Activated B cell treated with CpG ODN at 0.5 μM for 24 hours (primary cell): ENCODE measurements at regions of chr6 and their contacts with region 1.

Region 1: DNA sequence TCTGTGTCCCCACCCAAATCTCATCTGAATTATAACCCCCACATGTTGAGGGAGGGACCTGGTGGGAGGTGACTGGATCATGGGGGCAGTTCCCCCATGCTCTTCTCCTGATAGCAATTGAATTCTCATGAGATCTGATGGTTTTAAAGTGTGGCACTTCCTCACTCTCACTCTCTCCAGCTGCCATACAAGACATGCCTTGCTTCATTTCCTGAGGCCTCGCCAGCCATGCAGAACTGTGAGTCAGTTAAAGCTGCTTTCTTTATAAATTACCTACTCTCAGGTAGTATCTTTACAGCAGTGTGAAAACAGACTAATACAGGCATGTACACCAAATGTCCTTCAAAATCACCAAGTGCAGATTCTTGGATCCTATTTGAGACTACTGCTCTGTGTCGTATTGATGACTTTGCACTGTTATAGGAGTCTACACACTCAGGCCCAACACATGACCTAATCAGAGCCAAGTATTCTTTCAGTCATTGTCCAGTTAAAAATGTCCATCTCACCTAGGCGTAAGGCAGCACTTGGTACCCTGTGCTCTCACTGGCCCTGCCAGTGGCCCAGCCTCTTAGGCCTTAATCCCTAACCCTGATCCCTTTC is 52.8 kb upstream of the UST start:
- DNase-seq: peak; percentile 33
- ATAC-seq: peak; percentile 98
- H3K4me3 Mint-ChIP-seq: peak overlapping the region; percentile 62
- H3K27ac Mint-ChIP-seq: peak overlapping the region; percentile 90
- H3K4me1 Mint-ChIP-seq: peaks cover 27% of the 10 kb centered on the region
- H3K27me3 Mint-ChIP-seq: no peaks in the 10 kb centered on the region
- CTCF ChIP-seq: no peak

Region 2: GRCh38 chr6:148451690-148452089 is 242.3 kb before region 1 on chr6:
- CTCF ChIA-PET with region 1: no interaction called
- POLR2A ChIA-PET with region 1: no interaction called
- intact Hi-C with region 1: no loop called
- DNase-seq: no peak
- ATAC-seq: peak; percentile 45
- H3K4me3 Mint-ChIP-seq: no peak overlapping the region
- H3K27ac Mint-ChIP-seq: no peak overlapping the region
- H3K4me1 Mint-ChIP-seq: peaks cover 4% of the 10 kb centered on the region
- H3K27me3 Mint-ChIP-seq: peaks cover 36% of the 10 kb centered on the region
- CTCF ChIP-seq: no peak

Region 3: GRCh38 chr6:148657048-148657447 is 36.9 kb before region 1 on chr6:
- CTCF ChIA-PET with region 1: no interaction called
- POLR2A ChIA-PET with region 1: interaction called, 3 read pairs
- intact Hi-C with region 1: loop called (anchors 5 kb)
- DNase-seq: no peak
- ATAC-seq: peak; percentile 93
- H3K4me3 Mint-ChIP-seq: peak overlapping the region; percentile 47
- H3K27ac Mint-ChIP-seq: peak overlapping the region; percentile 86
- H3K4me1 Mint-ChIP-seq: peaks cover 19% of the 10 kb centered on the region
- H3K27me3 Mint-ChIP-seq: no peaks in the 10 kb centered on the region
- CTCF ChIP-seq: no peak

Region 4: DNA sequence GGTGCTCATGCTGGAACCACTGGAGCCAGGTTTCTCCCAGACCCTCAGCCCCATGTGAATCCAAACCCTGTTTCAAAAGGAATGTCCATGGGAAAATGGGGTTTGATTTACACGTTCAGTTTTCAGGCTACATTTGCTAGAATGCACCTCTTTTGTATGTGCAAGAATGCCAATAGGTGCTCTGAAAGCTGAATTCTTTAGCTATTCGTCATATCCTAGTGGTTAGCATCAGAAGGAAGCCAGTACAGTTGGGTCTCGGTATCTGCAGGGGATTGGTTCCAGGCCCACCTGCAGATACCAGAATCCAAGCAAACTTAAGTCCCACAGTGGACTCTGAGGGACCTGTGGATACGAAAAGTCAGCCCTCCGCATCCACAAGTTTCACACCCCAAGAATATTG is 146.3 kb after region 1 on chr6:
- CTCF ChIA-PET with region 1: no interaction called
- POLR2A ChIA-PET with region 1: no interaction called
- intact Hi-C with region 1: no loop called
- DNase-seq: no peak
- ATAC-seq: no peak
- H3K4me3 Mint-ChIP-seq: no peak overlapping the region
- H3K27ac Mint-ChIP-seq: no peak overlapping the region
- H3K4me1 Mint-ChIP-seq: peaks cover 42% of the 10 kb centered on the region
- H3K27me3 Mint-ChIP-seq: no peaks in the 10 kb centered on the region
- CTCF ChIP-seq: no peak